Sciatic nerve (tissue), 2 donors: ENCODE measurements at regions of chr11 and their contacts with region 1.

Region 1: GRCh38 chr11:102957953-102958352 is 2.4 kb upstream of the MMP13 start:
- DNase-seq: no peak
- ATAC-seq: no peak

Region 2: GRCh38 chr11:102794447-102794781 is 163.5 kb before region 1 on chr11:
- intact Hi-C with region 1: no loop called
- DNase-seq: no peak
- ATAC-seq: no peak

Region 3: GRCh38 chr11:102914238-102915043 is 43.5 kb before region 1 on chr11:
- intact Hi-C with region 1: loop called (anchors 1 kb)
- DNase-seq: no peak
- ATAC-seq: no peak